Heart left ventricle (tissue), 16 donors: ENCODE measurements at regions of chr21 and their contacts with region 1.

Region 1: DNA sequence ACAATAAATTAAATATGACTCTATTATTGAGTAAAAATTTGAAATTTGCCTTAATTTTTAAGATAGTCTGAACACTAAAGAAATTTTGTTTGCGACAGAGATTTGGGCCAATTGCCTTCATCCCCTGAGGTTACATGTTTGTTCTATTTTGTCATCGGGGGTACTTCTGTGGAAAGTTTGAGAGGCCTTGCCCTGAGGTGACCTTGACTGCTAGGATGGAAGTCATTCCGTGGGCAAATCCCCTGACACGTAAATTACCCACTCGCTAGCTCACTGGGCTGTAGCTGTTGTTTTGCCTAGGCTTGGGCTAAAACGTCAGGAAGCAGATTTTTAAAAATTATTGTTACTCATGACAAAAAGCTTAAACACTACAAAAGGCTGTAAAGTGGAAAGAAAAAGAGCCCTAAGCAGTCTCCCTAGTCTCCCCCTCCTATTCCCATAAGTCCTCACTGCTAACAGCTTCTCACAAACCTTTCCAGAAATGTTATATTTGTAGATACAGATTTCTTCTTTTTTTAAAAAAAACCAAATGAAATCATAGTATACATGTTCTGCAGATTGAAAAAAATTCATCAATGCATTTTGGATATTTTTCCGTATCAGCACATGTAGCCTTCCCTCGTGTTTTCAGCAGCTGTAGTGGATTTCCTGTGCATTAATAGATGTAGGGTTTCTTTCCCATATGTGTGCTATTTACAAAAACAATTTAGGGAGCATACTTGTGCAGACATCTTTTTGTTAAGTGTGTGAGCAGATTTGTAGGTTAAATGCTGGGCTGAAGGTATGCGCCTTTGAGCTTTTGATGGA is 142.7 kb downstream of the MRPS6 start:
- DNase-seq: peak in 1 of 5 donors; percentile 40
- ATAC-seq: peak in 1 of 4 donors; percentile 58
- H3K4me3 ChIP-seq: peak overlapping the region in 2 of 12 donors; percentile 11 to 21
- H3K27ac ChIP-seq: peak overlapping the region in 6 of 12 donors; percentile 4 to 38 (median 25)
- H3K4me1 ChIP-seq: peaks cover 0 to 19% (median 10%) of the 10 kb centered on the region in 12 donors
- H3K27me3 ChIP-seq: no peaks in the 10 kb centered on the region
- CTCF ChIP-seq: no peak
- POLR2A ChIP-seq: no peak

Region 2: DNA sequence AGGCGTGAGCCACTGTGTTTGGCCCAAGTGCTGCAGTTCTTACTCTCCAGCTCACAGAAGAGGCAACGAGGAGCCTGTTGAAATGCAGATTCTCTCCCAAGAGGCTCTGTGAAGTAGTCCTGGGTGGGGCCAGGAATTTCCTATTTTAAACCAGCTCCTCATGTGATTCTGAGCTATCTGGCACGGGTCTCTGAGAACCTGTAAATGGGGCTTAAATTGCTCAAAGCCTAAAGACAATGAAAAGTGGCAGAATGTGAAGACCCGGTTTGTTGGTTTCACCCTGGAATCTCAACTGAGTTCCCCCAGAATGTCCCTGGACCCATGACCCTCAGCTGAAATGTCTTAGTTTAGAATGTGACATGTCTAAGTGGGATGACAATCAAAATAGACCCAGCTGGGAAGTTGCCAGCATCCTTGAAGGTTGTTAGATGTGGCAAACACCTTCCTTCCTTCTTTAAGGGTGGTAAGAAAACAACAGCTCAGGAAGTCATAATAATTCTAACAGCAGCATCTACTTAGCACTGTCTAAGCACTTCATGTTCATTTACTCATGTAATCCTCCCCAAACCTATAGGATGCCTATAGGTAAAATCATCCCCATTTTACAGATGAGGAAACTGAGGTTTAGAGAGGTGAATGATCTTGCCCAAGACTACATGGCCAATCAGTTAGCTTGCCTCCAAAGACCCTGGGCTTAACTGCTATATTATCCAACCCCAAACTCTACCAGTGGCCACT is 279.6 kb before region 1 on chr21:
- intact Hi-C with region 1: no loop called
- DNase-seq: no peak
- ATAC-seq: no peak
- H3K4me3 ChIP-seq: peak overlapping the region in 1 of 12 donors; percentile 8
- H3K27ac ChIP-seq: peak overlapping the region in 1 of 12 donors; percentile 82
- H3K4me1 ChIP-seq: peaks cover 0 to 46% (median 7%) of the 10 kb centered on the region in 12 donors
- H3K27me3 ChIP-seq: no peaks in the 10 kb centered on the region
- CTCF ChIP-seq: no peak
- POLR2A ChIP-seq: no peak

Region 3: GRCh38 chr21:34157521-34157920 is 58.6 kb before region 1 on chr21:
- intact Hi-C with region 1: loop called in 1 of 10 experiments (anchors 10 kb)
- DNase-seq: no peak
- ATAC-seq: no peak
- H3K4me3 ChIP-seq: no peak overlapping the region
- H3K27ac ChIP-seq: no peak overlapping the region
- H3K4me1 ChIP-seq: peaks cover 0 to 12% (median 0%) of the 10 kb centered on the region in 12 donors
- H3K27me3 ChIP-seq: no peaks in the 10 kb centered on the region
- CTCF ChIP-seq: no peak
- POLR2A ChIP-seq: no peak